Cardiac septum (tissue), 1 donor: ENCODE measurements at regions of chr4 and their contacts with region 1.

Region 1: DNA sequence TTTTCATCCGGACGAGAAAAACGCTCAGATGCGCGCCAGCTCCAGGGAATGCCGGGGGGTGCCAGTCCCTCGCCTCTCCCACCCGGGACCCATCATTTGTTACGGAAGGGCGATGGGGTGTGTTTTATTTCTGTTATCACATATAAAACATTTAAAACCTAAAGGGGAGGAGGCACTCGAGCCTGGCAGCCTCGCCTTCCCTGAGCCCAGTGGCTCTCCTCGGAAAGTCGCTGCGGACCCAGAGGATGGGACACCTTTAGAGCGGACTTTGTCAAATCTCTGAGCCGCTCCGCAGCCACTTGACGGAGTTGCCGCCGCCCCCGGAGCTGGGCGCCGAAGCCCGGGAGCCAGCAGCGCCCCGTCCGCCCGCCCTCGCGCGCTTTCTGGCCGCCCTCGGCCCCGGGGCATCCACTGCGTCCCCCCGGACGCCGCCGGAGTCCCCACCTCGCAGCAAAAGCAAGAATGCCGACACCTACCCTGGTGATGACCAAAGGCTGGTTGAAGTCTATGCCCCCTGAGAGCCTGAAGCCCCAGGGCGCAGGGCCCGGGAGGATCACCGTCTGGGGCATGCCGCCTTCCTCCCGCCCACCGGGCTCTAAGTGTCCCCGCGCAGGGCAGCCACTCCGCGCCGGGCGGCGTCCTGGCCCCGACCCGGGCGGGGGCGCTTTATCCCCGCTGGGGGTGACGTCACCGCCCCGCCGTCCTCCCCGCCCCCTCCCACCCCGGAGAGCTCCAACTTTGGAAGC is at the start of gene PDLIM3:
- DNase-seq: peak; percentile 83
- total RNA-seq, gene PDLIM3: 265 TPM

Region 2: DNA sequence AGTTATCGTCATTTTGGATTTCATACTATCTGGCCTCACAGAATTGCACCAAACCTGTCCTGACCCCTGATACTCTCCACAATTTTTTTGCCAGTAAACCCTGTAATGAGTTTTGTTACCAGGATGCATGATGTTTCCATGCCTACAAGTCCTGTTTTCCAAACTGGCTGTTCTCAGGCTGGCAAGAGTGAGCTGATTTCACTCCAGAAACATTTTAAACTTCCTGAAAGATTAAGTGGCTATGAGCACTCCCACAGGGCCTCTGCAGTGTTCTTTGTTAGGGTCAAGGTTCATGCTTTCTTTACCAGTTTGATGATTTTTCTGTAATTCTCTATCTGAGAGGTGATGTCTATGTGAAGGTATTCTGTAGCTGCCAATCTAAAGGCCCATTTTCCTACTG is 31.9 kb after region 1 on chr4:
- intact Hi-C with region 1: loop called (anchors 2 kb)
- DNase-seq: no peak